AG04449 (cell line): ENCODE measurements at regions of chr2 and their contacts with region 1.

Region 1: GRCh38 chr2:69755862-69756467 is 14.0 kb downstream of the ANXA4 start:
- DNase-seq: no peak
- H3K4me3 ChIP-seq: no peak overlapping the region
- CTCF ChIP-seq: no peak

Region 2: DNA sequence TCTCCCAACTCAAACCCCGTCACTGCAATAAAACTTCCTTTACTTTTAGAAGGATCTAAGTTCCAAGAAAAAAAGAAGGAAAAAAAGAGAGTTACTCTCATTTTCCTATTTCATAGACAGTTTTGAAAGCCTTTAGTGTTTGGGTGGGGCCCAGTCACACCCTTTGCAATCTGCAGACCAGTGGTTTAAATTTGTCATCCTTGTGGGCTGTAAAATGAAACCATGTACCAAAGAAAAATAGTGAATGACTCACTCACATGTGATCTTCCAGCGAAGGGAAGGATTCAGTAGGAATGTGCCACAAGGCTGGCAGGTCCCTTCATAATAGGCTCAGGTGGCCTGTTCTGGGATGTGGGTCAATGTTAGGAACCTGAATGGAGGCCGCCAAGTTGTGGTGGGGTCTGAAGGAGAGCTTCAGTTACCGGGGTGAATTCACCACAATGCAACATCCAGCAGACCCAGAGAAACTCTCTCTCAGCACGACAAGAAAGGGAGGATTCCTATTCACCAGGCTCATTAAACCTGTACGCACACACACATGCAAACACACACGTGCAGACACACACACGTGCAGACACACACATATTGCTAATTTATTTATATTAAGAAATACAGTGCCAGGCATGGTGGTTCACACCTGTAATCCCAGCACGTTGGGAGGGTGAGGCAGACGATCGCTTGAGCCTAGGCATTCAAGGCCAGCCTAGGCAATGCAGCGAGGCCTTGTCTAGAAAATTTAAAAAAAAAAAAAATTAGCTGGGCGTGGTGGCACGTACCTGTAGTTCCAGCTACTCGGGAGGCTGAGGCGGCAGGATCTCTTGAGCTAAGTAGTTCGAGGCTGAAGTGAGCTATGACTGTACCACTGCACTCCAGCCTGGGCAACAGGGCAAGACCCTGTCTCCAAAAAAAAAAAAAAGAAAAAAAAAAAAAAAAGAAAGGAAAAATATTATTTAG is 14.5 kb after region 1 on chr2:
- CTCF ChIA-PET with region 1: interaction called, 17 read pairs
- POLR2A ChIA-PET with region 1: interaction called, 3 read pairs
- DNase-seq: no peak
- H3K4me3 ChIP-seq: no peak overlapping the region
- CTCF ChIP-seq: no peak